AG04449 (cell line): ENCODE measurements at regions of chr1 and their contacts with region 1.

Region 1: DNA sequence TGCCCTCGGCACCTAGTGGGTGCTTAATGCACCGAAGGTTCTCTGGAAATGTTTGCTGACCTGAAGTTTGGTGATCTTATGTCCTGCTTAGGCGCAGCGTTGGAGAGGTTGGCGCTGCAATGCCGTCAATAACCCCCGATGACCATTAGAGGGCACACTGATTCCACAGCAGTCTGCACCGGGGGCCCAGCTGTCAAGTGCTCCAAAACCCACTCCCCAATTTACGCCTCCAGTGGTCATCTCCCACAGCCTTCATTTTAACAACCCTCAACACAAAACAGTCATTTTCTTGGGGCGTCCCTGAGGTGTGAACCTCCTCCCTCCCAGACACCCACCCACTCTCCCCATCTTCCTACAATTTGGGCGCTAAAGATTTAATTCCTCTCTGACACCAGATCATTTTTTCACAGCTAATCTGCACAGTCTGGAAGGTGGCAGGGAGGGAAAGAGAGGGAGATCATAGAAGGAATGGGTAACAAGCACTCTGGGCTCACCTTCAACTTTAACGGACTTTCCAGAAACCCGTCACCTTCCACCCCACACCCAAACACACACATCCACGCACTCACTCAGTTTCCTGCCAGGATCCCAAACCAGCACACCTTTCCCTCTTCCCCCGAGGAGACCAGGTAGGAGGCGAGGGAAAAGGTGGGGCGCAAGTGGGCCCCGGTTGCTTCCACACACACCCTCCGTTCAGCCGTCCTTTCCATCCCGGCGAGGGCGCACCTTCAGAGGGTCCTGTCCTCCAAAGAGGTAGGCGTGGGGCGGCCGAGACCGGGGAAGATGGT is 576 bp upstream of the NPR1 start:
- DNase-seq: no peak
- H3K4me3 ChIP-seq: peak overlapping the region; percentile 39
- CTCF ChIP-seq: peak; percentile 92

Region 2: DNA sequence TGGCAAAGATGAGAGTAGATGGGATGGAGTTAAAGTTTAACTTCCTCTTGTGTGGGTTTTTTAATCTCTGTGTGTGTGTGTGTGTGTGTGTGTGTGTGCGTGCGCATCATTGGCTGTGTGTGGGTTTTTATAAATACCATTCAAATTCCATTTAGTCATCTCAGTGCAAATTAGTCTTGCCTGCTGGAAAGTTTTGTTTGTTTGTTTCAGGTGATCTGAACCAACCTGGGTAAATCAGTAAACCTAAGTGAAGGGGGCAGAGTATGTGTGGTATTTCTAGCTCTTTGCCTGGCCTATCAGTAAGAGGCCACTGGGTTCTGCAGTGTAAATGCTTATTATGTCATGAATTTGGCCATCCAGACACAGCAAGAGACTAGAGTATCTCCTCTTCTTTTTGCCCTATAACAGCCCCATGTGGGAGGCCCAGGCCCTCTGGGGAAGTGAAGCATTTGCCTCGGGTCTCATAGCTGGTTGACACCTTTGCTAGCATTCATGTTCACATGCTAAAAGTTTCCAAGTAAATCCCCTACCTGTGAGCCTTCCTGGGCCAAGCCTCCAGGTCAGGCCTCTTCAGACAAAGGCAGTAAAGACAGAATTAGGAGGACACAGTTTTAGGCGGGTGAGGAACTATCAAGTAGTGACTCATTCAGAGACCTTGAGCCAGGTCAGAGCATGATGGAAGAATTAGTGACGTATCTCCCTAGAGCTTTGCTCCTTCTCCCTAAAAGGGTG is 64.7 kb after region 1 on chr1:
- CTCF ChIA-PET with region 1: interaction called, 118 read pairs
- POLR2A ChIA-PET with region 1: interaction called, 3 read pairs
- DNase-seq: peak; percentile 37
- H3K4me3 ChIP-seq: no peak overlapping the region
- CTCF ChIP-seq: no peak

Region 3: DNA sequence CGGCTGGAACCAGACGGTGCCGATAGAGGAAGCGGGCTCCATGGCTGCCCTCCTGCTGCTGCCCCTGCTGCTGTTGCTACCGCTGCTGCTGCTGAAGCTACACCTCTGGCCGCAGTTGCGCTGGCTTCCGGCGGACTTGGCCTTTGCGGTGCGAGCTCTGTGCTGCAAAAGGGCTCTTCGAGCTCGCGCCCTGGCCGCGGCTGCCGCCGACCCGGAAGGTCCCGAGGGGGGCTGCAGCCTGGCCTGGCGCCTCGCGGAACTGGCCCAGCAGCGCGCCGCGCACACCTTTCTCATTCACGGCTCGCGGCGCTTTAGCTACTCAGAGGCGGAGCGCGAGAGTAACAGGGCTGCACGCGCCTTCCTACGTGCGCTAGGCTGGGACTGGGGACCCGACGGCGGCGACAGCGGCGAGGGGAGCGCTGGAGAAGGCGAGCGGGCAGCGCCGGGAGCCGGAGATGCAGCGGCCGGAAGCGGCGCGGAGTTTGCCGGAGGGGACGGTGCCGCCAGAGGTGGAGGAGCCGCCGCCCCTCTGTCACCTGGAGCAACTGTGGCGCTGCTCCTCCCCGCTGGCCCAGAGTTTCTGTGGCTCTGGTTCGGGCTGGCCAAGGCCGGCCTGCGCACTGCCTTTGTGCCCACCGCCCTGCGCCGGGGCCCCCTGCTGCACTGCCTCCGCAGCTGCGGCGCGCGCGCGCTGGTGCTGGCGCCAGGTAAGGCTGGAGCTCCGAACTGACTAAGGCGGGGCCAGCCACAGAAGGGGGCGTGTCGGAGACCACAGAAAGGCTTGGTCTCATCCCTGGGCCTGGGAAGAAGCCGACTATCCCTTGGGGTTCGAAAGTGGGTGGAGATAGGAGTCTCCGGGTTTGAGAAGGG is 97.8 kb after region 1 on chr1:
- CTCF ChIA-PET with region 1: interaction called, 10 read pairs
- POLR2A ChIA-PET with region 1: no interaction called
- DNase-seq: no peak
- H3K4me3 ChIP-seq: peak overlapping the region; percentile 64
- CTCF ChIP-seq: no peak